Breast epithelium (tissue), 4 donors: ENCODE measurements at regions of chr6 and their contacts with region 1.

Region 1: GRCh38 chr6:108774555-108774954 is 73.7 kb upstream of the ARMC2 start:
- DNase-seq: no peak
- H3K4me3 ChIP-seq: no peak overlapping the region
- H3K27ac ChIP-seq: no peak overlapping the region
- H3K4me1 ChIP-seq: no peaks in the 10 kb centered on the region
- H3K27me3 ChIP-seq: no peaks in the 10 kb centered on the region
- CTCF ChIP-seq: no peak
- POLR2A ChIP-seq: no peak

Region 2: DNA sequence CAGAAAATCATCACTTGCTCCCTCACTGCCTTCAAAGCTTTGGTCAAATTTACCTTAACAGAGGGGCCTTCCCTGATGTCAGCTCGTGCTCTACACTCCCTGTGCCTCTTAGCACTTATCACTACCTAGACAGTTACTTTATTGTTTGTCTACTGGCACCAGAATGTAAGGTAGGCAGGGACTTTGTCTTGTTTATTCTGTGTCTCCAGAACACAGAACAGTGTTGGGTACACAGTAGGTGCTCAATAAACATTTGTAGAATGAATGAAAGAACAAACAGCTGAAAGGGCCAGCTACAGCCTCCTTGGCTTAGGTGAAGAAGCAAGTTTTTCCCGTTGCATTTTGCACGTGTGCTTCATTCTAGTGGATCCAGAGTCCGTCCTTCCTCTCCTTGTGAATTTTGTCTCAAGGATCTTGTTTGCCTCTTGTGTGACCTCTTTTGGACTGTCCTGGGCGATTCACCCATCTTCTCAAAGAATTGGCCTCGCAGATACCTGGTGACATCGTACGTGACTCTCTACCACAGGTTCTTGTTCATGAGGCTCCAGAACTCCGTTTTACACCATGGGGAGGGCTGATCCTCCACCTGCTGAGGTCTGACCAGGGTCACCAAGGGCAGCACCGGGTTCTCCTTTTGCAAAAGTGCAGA is 10.5 kb before region 1 on chr6:
- intact Hi-C with region 1: loop called (anchors 1 kb)
- DNase-seq: no peak
- H3K4me3 ChIP-seq: no peak overlapping the region
- H3K27ac ChIP-seq: no peak overlapping the region
- H3K4me1 ChIP-seq: no peaks in the 10 kb centered on the region
- H3K27me3 ChIP-seq: no peaks in the 10 kb centered on the region
- CTCF ChIP-seq: no peak
- POLR2A ChIP-seq: no peak

Region 3: DNA sequence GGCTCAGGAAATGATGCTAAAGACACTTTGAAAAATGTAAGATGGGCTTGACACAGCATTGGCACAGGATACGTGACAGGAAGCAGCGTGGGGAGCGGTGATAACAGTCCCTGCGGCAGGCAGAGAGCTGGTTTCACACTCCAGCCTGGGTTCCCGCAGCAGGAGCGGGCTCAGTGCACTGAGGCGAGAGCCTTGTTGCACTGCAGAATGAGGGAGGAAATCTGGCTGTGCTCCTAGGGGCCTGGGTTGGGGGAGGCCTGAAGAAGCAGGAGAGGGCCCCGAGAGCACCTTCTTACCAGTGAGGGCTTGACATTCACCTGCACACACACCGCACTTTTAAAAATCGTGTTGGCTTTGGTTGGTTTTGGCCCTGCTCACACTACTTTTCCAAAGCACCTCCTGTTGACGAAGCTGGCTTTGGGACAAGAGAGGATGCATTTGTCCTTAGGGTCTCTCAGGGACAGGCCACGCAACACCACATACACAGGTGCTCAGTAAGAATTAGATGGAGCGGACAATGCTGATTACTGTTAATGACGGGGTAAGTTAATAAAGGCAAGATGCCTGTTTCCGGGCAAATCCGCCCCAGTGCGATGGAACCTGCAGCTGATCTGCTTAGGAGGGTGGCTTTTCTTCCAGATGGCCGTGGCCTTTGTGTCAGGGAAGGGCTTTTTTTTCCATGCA is 24.3 kb after region 1 on chr6:
- intact Hi-C with region 1: no loop called
- DNase-seq: no peak
- H3K4me3 ChIP-seq: no peak overlapping the region
- H3K27ac ChIP-seq: no peak overlapping the region
- H3K4me1 ChIP-seq: no peaks in the 10 kb centered on the region
- H3K27me3 ChIP-seq: no peaks in the 10 kb centered on the region
- CTCF ChIP-seq: no peak
- POLR2A ChIP-seq: no peak

Region 4: DNA sequence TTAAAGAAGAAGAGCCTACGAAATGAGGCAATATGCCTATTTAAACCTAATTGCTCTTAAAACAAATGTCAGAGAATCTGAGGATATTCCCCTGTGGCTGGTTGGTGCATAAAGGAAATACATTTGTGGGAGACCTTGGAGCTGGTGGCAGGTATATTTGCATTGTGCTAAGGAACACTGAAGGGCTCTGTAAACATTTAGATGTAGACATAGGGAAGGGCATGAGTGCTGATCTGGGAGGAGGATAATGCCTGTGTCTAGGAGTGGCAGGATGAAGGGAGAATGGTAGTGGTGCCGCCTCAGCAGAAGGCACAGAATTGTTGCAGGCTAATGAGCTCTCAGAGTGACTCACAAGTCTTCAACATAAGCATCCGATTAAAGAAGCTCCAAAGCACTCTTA is 521.9 kb after region 1 on chr6:
- intact Hi-C with region 1: no loop called
- DNase-seq: no peak
- H3K4me3 ChIP-seq: no peak overlapping the region
- H3K27ac ChIP-seq: peak overlapping the region in 1 of 2 donors; percentile 18
- H3K4me1 ChIP-seq: no peaks in the 10 kb centered on the region
- H3K27me3 ChIP-seq: no peaks in the 10 kb centered on the region
- CTCF ChIP-seq: no peak
- POLR2A ChIP-seq: no peak

Region 5: GRCh38 chr6:109854541-109855308 is 1080.2 kb after region 1 on chr6:
- intact Hi-C with region 1: no loop called
- DNase-seq: no peak
- H3K4me3 ChIP-seq: no peak overlapping the region
- H3K27ac ChIP-seq: no peak overlapping the region
- H3K4me1 ChIP-seq: no peaks in the 10 kb centered on the region
- H3K27me3 ChIP-seq: no peaks in the 10 kb centered on the region
- CTCF ChIP-seq: no peak
- POLR2A ChIP-seq: no peak